Activated CD4-positive, alpha-beta T cell treated with anti-CD3 and anti-CD28 coated beads, Interleukin-2, amount 10 ng/mL, durations not matched to agents 7 days and 5 days (primary cell): ENCODE measurements at regions of chr6 and their contacts with region 1.

Region 1: GRCh38 chr6:41027799-41028628 is 11.0 kb downstream of the UNC5CL start:
- DNase-seq: peak; percentile 76
- H3K4me3 Mint-ChIP-seq: peak overlapping the region; percentile 82
- H3K27ac Mint-ChIP-seq: peak overlapping the region; percentile 92
- H3K4me1 Mint-ChIP-seq: peaks cover 27% of the 10 kb centered on the region
- H3K27me3 Mint-ChIP-seq: no peaks in the 10 kb centered on the region

Region 2: DNA sequence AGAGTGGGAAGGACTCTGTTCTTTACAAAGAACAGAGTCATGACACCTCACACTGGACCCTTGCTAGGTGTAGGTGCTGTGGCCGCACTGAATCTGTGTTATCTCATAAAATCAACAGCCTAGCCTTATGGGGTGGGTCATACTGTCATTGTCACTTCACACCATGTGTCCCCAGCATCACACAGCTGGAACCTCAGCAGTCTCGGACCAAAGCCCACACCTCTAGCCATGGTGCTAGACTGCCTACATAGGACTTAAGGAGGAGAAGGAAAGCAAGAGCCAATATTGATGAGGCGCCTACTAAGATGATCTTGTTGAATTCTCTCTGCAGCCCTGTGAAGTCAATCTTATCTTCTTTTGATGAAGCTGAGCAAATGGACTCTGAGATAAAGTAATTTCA is 20.0 kb before region 1 on chr6:
- CTCF ChIA-PET with region 1: interaction called, 13 read pairs
- POLR2A ChIA-PET with region 1: interaction called, 3 read pairs
- DNase-seq: no peak
- H3K4me3 Mint-ChIP-seq: no peak overlapping the region
- H3K27ac Mint-ChIP-seq: no peak overlapping the region
- H3K4me1 Mint-ChIP-seq: peaks cover 3% of the 10 kb centered on the region
- H3K27me3 Mint-ChIP-seq: peaks cover 21% of the 10 kb centered on the region

Region 3: GRCh38 chr6:41013466-41014153 is 14.4 kb before region 1 on chr6:
- CTCF ChIA-PET with region 1: interaction called, 47 read pairs
- POLR2A ChIA-PET with region 1: no interaction called
- DNase-seq: no peak
- H3K4me3 Mint-ChIP-seq: no peak overlapping the region
- H3K27ac Mint-ChIP-seq: no peak overlapping the region
- H3K4me1 Mint-ChIP-seq: no peaks in the 10 kb centered on the region
- H3K27me3 Mint-ChIP-seq: peaks cover 6% of the 10 kb centered on the region

Region 4: GRCh38 chr6:41039060-41039998 is 11.3 kb after region 1 on chr6 and contains the start of gene UNC5CL:
- CTCF ChIA-PET with region 1: interaction called, 26 read pairs
- POLR2A ChIA-PET with region 1: interaction called, 3 read pairs
- DNase-seq: peak; percentile 81
- H3K4me3 Mint-ChIP-seq: no peak within 1 kb of the TSS
- H3K27ac Mint-ChIP-seq: peak within 1 kb of the TSS; percentile 9
- H3K4me1 Mint-ChIP-seq: peaks cover 12% of the 10 kb centered on the region
- H3K27me3 Mint-ChIP-seq: peaks cover 3% of the 10 kb centered on the region
- total RNA-seq, gene UNC5CL: 1.1 to 1.6 TPM

Region 5: GRCh38 chr6:41049521-41049920 is 21.5 kb after region 1 on chr6:
- CTCF ChIA-PET with region 1: interaction called, 23 read pairs
- POLR2A ChIA-PET with region 1: no interaction called
- DNase-seq: no peak
- H3K4me3 Mint-ChIP-seq: no peak overlapping the region
- H3K27ac Mint-ChIP-seq: no peak overlapping the region
- H3K4me1 Mint-ChIP-seq: peaks cover 20% of the 10 kb centered on the region
- H3K27me3 Mint-ChIP-seq: no peaks in the 10 kb centered on the region

Region 6: DNA sequence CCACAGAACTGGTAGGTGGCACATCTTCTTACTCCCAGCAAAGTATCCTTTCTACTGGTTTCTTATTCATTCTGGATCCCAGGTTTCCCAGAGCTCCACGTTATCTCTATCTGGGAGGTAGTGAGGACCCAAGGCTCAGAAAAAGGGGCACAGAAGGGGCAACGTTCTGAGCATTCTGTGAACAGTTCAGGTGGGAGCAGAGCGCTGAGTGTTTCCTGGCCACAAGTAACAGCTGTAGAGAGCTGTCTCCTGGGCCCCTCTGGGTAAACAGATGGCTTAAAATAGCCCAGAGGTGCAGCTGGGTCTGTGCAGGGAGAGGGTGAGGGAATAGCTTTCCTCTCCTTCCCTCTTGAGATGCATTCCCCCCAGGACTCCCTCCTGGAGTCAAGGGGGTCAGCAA is 27.1 kb after region 1 on chr6:
- CTCF ChIA-PET with region 1: interaction called, 23 read pairs
- POLR2A ChIA-PET with region 1: no interaction called
- DNase-seq: no peak
- H3K4me3 Mint-ChIP-seq: no peak overlapping the region
- H3K27ac Mint-ChIP-seq: no peak overlapping the region
- H3K4me1 Mint-ChIP-seq: peaks cover 23% of the 10 kb centered on the region
- H3K27me3 Mint-ChIP-seq: no peaks in the 10 kb centered on the region